Ovary (tissue), 10 donors: ENCODE measurements at regions of chr2 and their contacts with region 1.

Region 1: GRCh38 chr2:83787189-83787588 is 671.9 kb downstream of the SUCLG1 start:
- DNase-seq: no peak
- H3K4me3 ChIP-seq: no peak overlapping the region
- H3K27ac ChIP-seq: no peak overlapping the region
- H3K4me1 ChIP-seq: no peaks in the 10 kb centered on the region
- H3K27me3 ChIP-seq: no peaks in the 10 kb centered on the region
- CTCF ChIP-seq: no peak
- EP300 ChIP-seq: no peak
- POLR2A ChIP-seq: no peak

Region 2: DNA sequence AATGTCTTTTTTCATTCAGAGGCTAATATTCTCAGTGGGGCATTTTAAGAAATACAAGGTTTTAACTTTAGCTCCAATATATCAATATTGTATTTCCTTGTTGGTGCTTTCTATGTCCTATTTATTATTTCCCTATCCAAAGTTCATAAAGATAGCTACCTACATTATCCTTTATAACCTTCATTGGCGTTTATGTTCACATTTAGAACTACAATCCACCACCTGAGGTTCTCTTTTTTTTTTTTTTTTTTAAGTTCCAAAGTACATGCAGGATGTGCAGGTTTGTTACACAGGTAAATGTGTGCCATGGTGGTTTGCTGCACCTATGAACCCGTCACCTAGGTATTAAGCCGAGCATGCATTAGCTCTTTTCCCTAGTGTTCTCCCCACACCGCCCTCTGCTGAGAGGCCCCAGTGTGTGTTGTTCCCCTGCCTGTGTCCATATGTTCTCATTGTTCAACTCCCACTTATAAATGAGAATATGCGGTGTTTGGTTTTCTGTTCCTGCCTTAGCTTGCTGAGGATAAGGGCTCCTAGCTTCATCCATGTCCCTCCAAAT is 22.7 kb before region 1 on chr2:
- intact Hi-C with region 1: loop called in 1 of 4 experiments (anchors 1 kb)
- DNase-seq: no peak
- H3K4me3 ChIP-seq: no peak overlapping the region
- H3K27ac ChIP-seq: no peak overlapping the region
- H3K4me1 ChIP-seq: no peaks in the 10 kb centered on the region
- H3K27me3 ChIP-seq: no peaks in the 10 kb centered on the region
- CTCF ChIP-seq: no peak
- EP300 ChIP-seq: no peak
- POLR2A ChIP-seq: no peak